ENCODE measurements at regions of chr16 and their contacts with region 1.

Region 1: GRCh38 chr16:81737885-81738786 is 41.0 kb upstream of the PLCG2 start:
- DNase-seq: peak; percentile 72 to 87 (median 77)
- H3K4me3 ChIP-seq: peak overlapping the region; percentile 44
- H3K4me3 Mint-ChIP-seq: peak overlapping the region; percentile 56 to 85 (median 72)
- H3K27ac ChIP-seq: no peak overlapping the region
- H3K27ac Mint-ChIP-seq: peak overlapping the region in 3 of 8 donors; percentile 33 to 49 (median 42)
- H3K4me1 ChIP-seq: peaks cover 8% of the 10 kb centered on the region
- H3K4me1 Mint-ChIP-seq: peaks cover 4 to 7% (median 7%) of the 10 kb centered on the region in 3 donors
- H3K27me3 ChIP-seq: no peaks in the 10 kb centered on the region
- H3K27me3 Mint-ChIP-seq: peaks cover 0 to 8% of the 10 kb centered on the region in 2 donors

Region 2: DNA sequence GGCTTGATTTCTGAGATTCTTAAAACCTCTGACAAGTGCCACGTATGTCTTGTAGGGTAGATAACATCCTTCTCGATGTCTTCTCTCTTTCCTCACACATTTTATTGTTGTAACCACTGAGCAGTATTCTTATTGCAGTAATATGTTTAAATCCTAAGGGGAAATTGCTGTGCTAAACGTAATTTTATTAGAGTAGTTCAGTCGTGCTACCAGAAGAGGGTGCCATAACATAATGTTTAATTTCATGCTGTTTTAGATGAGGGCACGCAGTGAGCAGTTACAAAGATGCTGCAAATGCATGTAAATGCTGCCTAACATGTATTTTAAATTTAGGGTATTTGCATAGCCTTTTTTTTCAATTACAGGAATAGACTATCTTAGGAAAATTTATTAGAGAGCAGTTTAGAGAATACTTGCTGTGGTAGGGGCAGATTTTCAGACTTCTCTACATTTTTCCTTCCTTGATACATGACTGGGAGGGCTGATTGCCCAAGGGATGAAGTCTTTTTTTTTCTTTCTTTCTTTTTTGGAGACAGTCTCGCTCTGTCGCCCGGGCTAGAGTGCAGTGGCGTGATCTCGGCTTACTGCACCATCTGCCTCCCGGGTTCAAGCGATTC is 371.7 kb before region 1 on chr16:
- CTCF ChIA-PET with region 1: interaction called, 19 read pairs
- POLR2A ChIA-PET with region 1: no interaction called
- DNase-seq: peak in 2 of 5 donors; percentile 31 to 37
- H3K4me3 ChIP-seq: no peak overlapping the region
- H3K4me3 Mint-ChIP-seq: no peak overlapping the region
- H3K27ac ChIP-seq: no peak overlapping the region
- H3K27ac Mint-ChIP-seq: peak overlapping the region in 3 of 8 donors; percentile 24 to 52 (median 38)
- H3K4me1 ChIP-seq: no peaks in the 10 kb centered on the region
- H3K4me1 Mint-ChIP-seq: no peaks in the 10 kb centered on the region
- H3K27me3 ChIP-seq: no peaks in the 10 kb centered on the region
- H3K27me3 Mint-ChIP-seq: no peaks in the 10 kb centered on the region

Region 3: GRCh38 chr16:81376880-81377279 is 361.3 kb before region 1 on chr16:
- CTCF ChIA-PET with region 1: interaction called, 3 read pairs
- POLR2A ChIA-PET with region 1: interaction called, 11 read pairs
- DNase-seq: no peak
- H3K4me3 ChIP-seq: no peak overlapping the region
- H3K4me3 Mint-ChIP-seq: no peak overlapping the region
- H3K27ac ChIP-seq: no peak overlapping the region
- H3K27ac Mint-ChIP-seq: peak overlapping the region in 1 of 8 donors; percentile 43
- H3K4me1 ChIP-seq: no peaks in the 10 kb centered on the region
- H3K4me1 Mint-ChIP-seq: peaks cover 0 to 2% (median 0%) of the 10 kb centered on the region in 3 donors
- H3K27me3 ChIP-seq: no peaks in the 10 kb centered on the region
- H3K27me3 Mint-ChIP-seq: no peaks in the 10 kb centered on the region

Region 4: GRCh38 chr16:81723098-81723723 is 14.9 kb before region 1 on chr16:
- CTCF ChIA-PET with region 1: interaction called, 12 read pairs
- POLR2A ChIA-PET with region 1: interaction called, 3 read pairs
- DNase-seq: peak in 4 of 5 donors; percentile 18 to 67 (median 66)
- H3K4me3 ChIP-seq: no peak overlapping the region
- H3K4me3 Mint-ChIP-seq: peak overlapping the region in 1 of 7 donors; percentile 5
- H3K27ac ChIP-seq: no peak overlapping the region
- H3K27ac Mint-ChIP-seq: peak overlapping the region in 2 of 8 donors; percentile 37 to 59
- H3K4me1 ChIP-seq: peaks cover 5% of the 10 kb centered on the region
- H3K4me1 Mint-ChIP-seq: peaks cover 11 to 22% (median 19%) of the 10 kb centered on the region in 3 donors
- H3K27me3 ChIP-seq: no peaks in the 10 kb centered on the region
- H3K27me3 Mint-ChIP-seq: peaks cover 0 to 3% of the 10 kb centered on the region in 2 donors

Region 5: DNA sequence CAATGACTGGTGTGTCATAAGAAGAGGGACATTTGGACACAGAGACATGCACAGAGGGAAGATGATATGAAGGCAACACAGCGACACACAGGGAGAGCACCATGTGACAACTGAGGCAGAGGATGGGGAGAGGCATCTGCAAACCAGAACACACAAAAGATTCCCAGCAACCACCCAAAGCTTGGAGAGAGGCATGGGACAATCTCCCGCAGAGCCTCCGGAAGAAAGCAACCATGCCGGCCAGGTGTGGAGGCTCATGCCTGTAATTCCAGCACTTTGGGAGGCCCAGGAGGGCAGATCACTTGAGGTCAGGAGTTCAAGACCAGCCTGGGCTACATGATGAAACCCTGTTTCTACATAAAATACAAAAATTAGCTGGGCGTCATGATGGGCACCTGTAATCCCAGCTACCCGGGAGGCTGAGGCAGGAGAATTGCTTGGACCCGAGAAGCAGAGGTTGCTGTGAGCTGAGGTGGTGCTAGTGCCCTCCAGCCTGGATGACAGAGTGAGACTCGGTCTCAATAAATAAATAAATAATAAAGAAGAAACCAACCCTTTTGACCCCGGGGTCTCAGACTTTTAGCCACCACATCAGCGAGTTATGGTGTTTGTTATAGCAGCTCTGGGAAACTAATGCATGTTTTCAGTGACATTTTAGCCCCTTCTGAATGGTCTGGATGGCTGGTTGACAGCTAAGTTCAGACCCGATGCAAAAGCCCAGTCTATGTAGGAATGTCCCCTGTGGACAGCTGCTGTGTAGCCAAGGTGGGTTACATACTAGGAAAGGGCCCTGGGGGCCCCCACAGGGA is 27.2 kb after region 1 on chr16:
- CTCF ChIA-PET with region 1: no interaction called
- POLR2A ChIA-PET with region 1: no interaction called
- DNase-seq: no peak
- H3K4me3 ChIP-seq: no peak overlapping the region
- H3K4me3 Mint-ChIP-seq: no peak overlapping the region
- H3K27ac ChIP-seq: no peak overlapping the region
- H3K27ac Mint-ChIP-seq: no peak overlapping the region
- H3K4me1 ChIP-seq: no peaks in the 10 kb centered on the region
- H3K4me1 Mint-ChIP-seq: peaks cover 0 to 4% (median 0%) of the 10 kb centered on the region in 3 donors
- H3K27me3 ChIP-seq: peaks cover 5% of the 10 kb centered on the region
- H3K27me3 Mint-ChIP-seq: peaks cover 0 to 5% of the 10 kb centered on the region in 2 donors